HCT116 (cell line): ENCODE measurements at regions of chr4 and their contacts with region 1.

Region 1: DNA sequence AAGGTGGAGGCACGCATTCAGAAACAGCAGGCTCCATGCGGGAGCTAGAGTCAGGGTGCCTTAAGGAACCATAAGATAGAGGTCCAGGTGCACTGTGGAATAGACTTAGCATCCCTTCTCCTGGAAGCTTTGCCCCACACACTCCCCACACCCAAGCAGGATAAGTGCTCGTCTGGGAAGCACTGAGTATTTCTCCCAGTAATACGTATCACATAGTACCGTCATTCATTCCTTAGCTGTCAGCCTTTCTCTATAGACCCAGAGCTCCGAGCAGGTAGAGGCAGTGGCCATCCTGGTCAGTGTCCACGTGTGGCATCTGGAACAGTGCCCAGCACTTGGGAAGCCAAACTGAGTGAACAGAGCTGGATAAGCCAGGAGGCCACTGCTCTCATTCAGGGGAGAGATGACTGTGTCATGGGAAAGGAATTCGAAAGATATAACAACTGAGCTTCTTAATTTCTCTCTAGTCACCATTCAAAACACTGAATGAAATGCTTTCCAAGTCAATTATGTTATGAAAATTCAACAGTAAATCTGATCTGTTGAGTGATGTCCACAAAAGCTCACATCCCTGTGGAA is 9.9 kb downstream of the APBB2 start:
- DNase-seq: peak; percentile 67
- ATAC-seq: peak; percentile 81
- H3K4me3 ChIP-seq: peak overlapping the region in 1 of 2 experiments; percentile 30; a peak in 2 of 4 replicates
- H3K27ac ChIP-seq: peak overlapping the region; percentile 56; the same call in 1 of the 2 replicates
- H3K4me1 ChIP-seq: peaks cover 46 to 71% of the 10 kb centered on the region in 2 experiments
- H3K27me3 ChIP-seq: no peaks in the 10 kb centered on the region
- CTCF ChIP-seq: no peak
- POLR2A ChIP-seq: no peak
- RAD21 ChIP-seq: peak; percentile 17; the same call in 1 of the 2 replicates

Region 2: DNA sequence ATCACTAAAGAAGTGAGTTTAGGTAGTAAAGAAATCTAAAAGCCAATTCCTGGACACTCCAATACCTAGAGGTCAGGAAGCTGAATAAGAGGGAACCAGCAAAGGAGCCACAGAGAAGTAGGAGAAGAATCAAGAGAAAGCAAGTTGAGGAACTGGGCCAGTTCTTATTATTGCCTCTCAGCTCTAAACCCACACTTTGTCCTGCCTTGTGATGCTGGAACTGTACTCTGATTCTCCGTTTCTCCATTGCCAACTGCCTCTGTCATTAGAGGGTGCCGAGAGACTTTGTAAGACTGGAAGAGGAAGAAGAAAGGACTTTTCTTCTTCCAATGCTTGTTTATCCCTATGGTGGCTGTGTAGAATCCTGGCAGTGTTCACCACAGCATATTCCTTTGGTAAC is 416.2 kb before region 1 on chr4:
- CTCF ChIA-PET with region 1: no interaction called
- POLR2A ChIA-PET with region 1: no interaction called
- RAD21 ChIA-PET with region 1: no interaction called
- intact Hi-C with region 1: no loop called
- DNase-seq: no peak
- ATAC-seq: no peak
- H3K4me3 ChIP-seq: no peak overlapping the region
- H3K27ac ChIP-seq: no peak overlapping the region
- H3K4me1 ChIP-seq: no peaks in the 10 kb centered on the region
- H3K27me3 ChIP-seq: no peaks in the 10 kb centered on the region
- CTCF ChIP-seq: no peak
- POLR2A ChIP-seq: no peak
- RAD21 ChIP-seq: 0 out of 2 replicates have a peak, but pooled peaks have one; percentile 6

Region 3: GRCh38 chr4:40976343-40976742 is 228.1 kb before region 1 on chr4:
- CTCF ChIA-PET with region 1: interaction called, 13 read pairs
- POLR2A ChIA-PET with region 1: no interaction called
- RAD21 ChIA-PET with region 1: no interaction called
- intact Hi-C with region 1: no loop called
- DNase-seq: peak; percentile 51
- ATAC-seq: peak; percentile 75
- H3K4me3 ChIP-seq: no peak overlapping the region
- H3K27ac ChIP-seq: no peak overlapping the region
- H3K4me1 ChIP-seq: peaks cover 2 to 9% of the 10 kb centered on the region in 2 experiments; a peak in 3 of 4 replicates
- H3K27me3 ChIP-seq: no peaks in the 10 kb centered on the region
- CTCF ChIP-seq: peak; percentile 47 to 80 (median 70)
- POLR2A ChIP-seq: no peak
- RAD21 ChIP-seq: peak; percentile 72